Colonic mucosa (tissue), 4 donors: ENCODE measurements at regions of chr12 and their contacts with region 1.

Region 1: GRCh38 chr12:14995583-14996425 is 23.0 kb downstream of the PDE6H start:
- DNase-seq: no peak
- H3K4me3 ChIP-seq: no peak overlapping the region
- H3K27ac ChIP-seq: no peak overlapping the region
- H3K4me1 ChIP-seq: no peaks in the 10 kb centered on the region
- H3K27me3 ChIP-seq: no peaks in the 10 kb centered on the region
- CTCF ChIP-seq: peak; percentile 60

Region 2: DNA sequence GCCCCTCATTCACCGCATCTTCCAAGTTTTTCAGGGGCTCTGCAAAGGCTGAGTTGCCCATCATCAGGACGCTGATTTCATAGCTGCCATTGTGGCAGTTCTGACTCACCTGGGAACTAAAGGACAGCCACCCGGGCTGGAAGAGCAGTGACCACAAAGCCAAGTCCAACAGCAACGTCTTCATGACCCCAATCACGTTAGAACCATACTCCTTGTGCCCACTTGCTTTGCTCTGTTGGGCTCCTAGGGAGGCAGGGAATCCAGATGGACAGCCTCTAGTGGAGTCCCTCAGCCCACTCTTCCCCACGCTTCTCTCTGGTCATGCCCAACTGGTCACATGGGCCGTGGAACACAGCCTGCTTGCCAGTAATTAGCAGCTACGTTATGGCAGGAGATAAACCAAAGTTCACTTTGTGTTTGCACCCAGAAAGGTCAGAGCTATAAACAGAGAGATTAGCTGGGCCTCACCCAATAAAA is 299.5 kb before region 1 on chr12 and contains the start of gene GUCY2C:
- intact Hi-C with region 1: no loop called
- DNase-seq: peak; percentile 88
- H3K4me3 ChIP-seq: peak within 1 kb of the TSS; percentile 40
- H3K27ac ChIP-seq: peak within 1 kb of the TSS; percentile 89
- H3K4me1 ChIP-seq: no peaks in the 10 kb centered on the region
- H3K27me3 ChIP-seq: no peaks in the 10 kb centered on the region
- CTCF ChIP-seq: no peak
- total RNA-seq, gene GUCY2C: 52.2 to 74.6 TPM

Region 3: DNA sequence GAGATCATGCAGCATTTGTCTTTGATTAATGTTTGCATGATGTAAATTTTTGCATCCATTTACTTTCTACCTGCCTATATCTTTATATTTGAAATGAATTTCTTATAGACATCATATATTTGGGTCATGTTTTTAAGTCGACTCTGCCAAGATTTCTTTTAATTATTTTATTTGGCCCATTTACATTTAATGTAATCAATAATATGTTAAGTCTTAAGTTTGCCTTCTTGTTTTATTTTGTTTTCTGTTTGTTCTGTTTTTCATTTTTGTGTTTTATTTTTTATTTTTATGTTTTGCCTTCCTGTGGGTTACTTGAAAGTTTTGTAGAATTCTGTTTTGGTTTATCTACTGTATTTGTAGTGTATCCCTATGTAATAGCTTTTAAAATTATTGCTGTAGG is 266.2 kb before region 1 on chr12:
- intact Hi-C with region 1: loop called (anchors 5 kb)
- DNase-seq: no peak
- H3K4me3 ChIP-seq: no peak overlapping the region
- H3K27ac ChIP-seq: no peak overlapping the region
- H3K4me1 ChIP-seq: no peaks in the 10 kb centered on the region
- H3K27me3 ChIP-seq: no peaks in the 10 kb centered on the region
- CTCF ChIP-seq: no peak

Region 4: DNA sequence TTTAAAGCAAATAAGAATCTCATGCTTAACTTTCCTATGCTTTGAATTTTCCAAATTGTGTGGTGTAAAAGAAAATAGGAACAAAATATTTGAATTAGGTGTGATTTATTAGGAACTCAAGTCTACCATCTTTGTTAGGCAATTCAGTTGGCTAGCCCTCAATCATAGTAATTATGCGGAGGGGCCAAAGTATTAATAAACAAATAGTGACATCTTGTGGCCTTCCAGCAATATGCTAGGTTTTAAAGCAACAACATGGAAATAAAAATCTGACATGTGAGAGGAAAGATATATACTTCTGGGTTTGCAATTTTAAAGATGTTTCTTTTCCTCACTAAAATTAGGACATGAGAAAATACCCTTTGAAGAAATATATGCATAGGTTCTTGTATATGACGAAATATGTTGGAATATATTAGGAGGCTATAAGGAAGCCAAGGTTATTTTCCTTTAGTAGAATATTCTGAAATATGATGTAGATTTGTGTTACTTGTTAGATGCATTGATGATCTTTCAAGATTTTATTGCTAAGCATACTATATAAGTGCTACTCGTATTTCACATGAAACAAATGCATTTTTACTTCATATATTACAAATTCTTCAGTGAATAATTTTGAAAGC is 526.9 kb after region 1 on chr12:
- intact Hi-C with region 1: no loop called
- DNase-seq: no peak
- H3K4me3 ChIP-seq: no peak overlapping the region
- H3K27ac ChIP-seq: no peak overlapping the region
- H3K4me1 ChIP-seq: no peaks in the 10 kb centered on the region
- H3K27me3 ChIP-seq: no peaks in the 10 kb centered on the region
- CTCF ChIP-seq: peak; percentile 29

Region 5: GRCh38 chr12:16246264-16246663 is 1250.5 kb after region 1 on chr12:
- intact Hi-C with region 1: no loop called
- DNase-seq: no peak
- H3K4me3 ChIP-seq: no peak overlapping the region
- H3K27ac ChIP-seq: no peak overlapping the region
- H3K4me1 ChIP-seq: no peaks in the 10 kb centered on the region
- H3K27me3 ChIP-seq: no peaks in the 10 kb centered on the region
- CTCF ChIP-seq: no peak